Activated CD4-positive, alpha-beta T cell treated with anti-CD3 and anti-CD28 coated beads for 36 hours (primary cell): ENCODE measurements at regions of chr10 and their contacts with region 1.

Region 1: GRCh38 chr10:62681211-62681940 is 123.1 kb upstream of the ADO start:
- DNase-seq: peak; percentile 94
- ATAC-seq: peak; percentile 94
- H3K4me3 Mint-ChIP-seq: peak overlapping the region; percentile 11
- H3K27ac Mint-ChIP-seq: peak overlapping the region; percentile 86
- H3K4me1 Mint-ChIP-seq: peaks cover 34% of the 10 kb centered on the region
- H3K27me3 Mint-ChIP-seq: peaks cover 7% of the 10 kb centered on the region

Region 2: DNA sequence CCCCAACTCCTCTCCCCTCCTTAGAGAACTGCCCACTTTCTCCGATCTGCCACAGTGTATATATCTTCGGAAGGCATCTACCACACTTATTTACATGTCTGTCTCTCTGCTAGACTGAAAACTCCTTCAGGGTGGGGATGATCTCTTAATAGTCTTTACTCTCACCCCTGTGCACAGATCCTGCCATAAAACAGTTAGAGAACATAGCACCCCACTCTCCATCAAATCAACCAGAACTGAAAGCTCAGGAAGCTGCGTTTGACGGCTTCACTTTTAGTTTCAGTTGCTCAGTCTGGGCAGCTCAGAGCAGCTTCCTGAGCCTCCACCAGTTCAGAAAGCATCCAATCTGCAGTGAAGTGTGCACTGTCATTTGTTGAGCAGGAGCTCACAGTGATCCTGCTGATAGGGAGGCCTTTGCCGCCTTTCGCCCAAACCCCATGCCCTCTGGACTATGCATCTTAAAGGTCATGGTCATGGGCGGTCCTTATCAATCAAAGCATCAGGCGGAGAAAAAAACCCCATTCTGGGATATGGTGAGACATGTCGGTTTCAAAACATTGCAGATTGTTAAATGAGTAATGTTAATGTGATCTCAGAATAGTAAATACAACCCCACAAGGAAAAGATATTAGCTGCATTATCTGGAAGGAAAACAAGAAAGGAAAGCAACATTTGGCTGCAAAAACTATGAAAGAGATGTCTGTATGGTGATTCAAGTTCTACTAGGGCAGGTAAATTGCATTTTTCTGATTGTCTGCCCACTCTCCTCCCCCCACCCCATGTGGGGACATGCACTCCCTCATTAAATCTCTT is 43.9 kb before region 1 on chr10:
- CTCF ChIA-PET with region 1: interaction called, 12 read pairs
- POLR2A ChIA-PET with region 1: interaction called, 7 read pairs
- intact Hi-C with region 1: loop called (anchors 1 kb)
- DNase-seq: peak; percentile 82
- ATAC-seq: peak; percentile 95
- H3K4me3 Mint-ChIP-seq: no peak overlapping the region
- H3K27ac Mint-ChIP-seq: no peak overlapping the region
- H3K4me1 Mint-ChIP-seq: peaks cover 21% of the 10 kb centered on the region
- H3K27me3 Mint-ChIP-seq: no peaks in the 10 kb centered on the region

Region 3: DNA sequence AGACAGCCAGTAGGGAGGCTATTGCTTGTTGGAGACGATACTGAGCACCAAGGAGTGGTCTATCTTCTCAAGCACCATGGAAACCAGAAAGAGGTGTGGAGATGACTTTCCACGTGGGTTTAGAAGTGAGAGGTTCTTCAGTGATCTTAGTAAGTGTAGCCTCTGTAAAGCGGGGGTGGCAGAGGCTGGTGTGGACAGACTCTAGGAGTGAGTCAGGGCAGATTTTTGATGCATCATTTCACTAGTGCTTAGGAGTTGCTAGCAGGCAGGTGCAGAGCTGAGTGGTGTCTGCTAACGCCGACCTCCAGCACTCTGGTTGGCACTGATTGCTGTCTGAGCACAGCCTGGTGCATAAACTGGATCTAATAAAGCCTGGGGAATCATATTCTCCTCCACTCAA is 44.8 kb after region 1 on chr10:
- CTCF ChIA-PET with region 1: interaction called, 14 read pairs
- POLR2A ChIA-PET with region 1: no interaction called
- intact Hi-C with region 1: loop called in 1 of 2 experiments (anchors 1 kb)
- DNase-seq: peak; percentile 84
- ATAC-seq: peak; percentile 97
- H3K4me3 Mint-ChIP-seq: no peak overlapping the region
- H3K27ac Mint-ChIP-seq: no peak overlapping the region
- H3K4me1 Mint-ChIP-seq: peaks cover 48% of the 10 kb centered on the region
- H3K27me3 Mint-ChIP-seq: peaks cover 2% of the 10 kb centered on the region

Region 4: GRCh38 chr10:62748386-62748785 is 67.0 kb after region 1 on chr10:
- CTCF ChIA-PET with region 1: interaction called, 5 read pairs
- POLR2A ChIA-PET with region 1: interaction called, 3 read pairs
- intact Hi-C with region 1: loop called in 1 of 2 experiments (anchors 1 kb)
- DNase-seq: no peak
- ATAC-seq: no peak
- H3K4me3 Mint-ChIP-seq: no peak overlapping the region
- H3K27ac Mint-ChIP-seq: peak overlapping the region; percentile 82
- H3K4me1 Mint-ChIP-seq: peaks cover 27% of the 10 kb centered on the region
- H3K27me3 Mint-ChIP-seq: no peaks in the 10 kb centered on the region

Region 5: GRCh38 chr10:62804356-62805230 is 123.2 kb after region 1 on chr10 and contains the start of gene ADO:
- CTCF ChIA-PET with region 1: interaction called, 3 read pairs
- POLR2A ChIA-PET with region 1: no interaction called
- intact Hi-C with region 1: loop called in 1 of 2 experiments (anchors 1 kb)
- DNase-seq: peak; percentile 88
- ATAC-seq: peak; percentile 90
- H3K4me3 Mint-ChIP-seq: peak within 1 kb of the TSS; percentile 83
- H3K27ac Mint-ChIP-seq: peak within 1 kb of the TSS; percentile 99
- H3K4me1 Mint-ChIP-seq: peaks cover 33% of the 10 kb centered on the region
- H3K27me3 Mint-ChIP-seq: no peaks in the 10 kb centered on the region
- total RNA-seq, gene ADO: 21.5 to 23.2 TPM

Region 6: DNA sequence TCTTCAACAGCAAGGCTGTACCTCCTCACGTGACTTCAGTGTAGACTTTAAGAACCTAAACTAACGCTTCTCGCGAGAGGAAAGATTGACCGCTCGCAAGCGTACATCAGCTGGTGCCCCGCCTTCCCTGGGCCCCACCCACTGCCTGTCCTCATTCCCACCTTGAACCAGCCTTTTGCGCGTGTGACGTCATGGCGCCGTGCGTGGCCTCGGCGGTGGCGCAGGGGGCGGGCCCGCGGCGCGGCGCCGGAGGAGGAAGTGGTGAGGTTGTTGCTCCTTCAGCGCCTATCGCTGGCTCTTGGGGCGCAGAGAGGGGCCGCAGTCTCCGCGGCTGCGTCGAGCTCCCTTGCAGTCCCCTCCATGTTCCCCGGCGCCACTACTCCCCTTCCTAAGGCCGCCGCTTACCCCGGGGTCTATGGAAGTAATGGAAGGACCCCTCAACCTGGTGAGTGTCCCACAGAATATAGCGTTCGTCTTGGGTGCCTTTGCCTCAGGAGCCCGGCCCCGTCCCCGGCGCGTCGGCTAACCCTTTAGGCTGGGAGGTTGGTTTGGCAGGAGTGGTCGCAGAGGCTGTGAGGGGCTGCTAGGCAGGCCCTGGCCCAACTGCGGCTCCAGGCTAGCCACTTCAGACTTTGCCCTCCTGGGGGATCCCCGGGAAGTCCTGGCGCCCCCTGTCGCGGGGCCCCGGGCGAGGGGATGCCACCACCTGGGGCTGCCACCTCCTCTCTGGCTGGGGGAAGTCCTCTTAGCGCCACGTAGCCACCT is 451.9 kb after region 1 on chr10 and contains the start of gene NRBF2:
- CTCF ChIA-PET with region 1: interaction called, 4 read pairs
- POLR2A ChIA-PET with region 1: no interaction called
- intact Hi-C with region 1: loop called in 1 of 2 experiments (anchors 1 kb)
- DNase-seq: peak; percentile 99
- ATAC-seq: peak; percentile 90
- H3K4me3 Mint-ChIP-seq: peak within 1 kb of the TSS; percentile 81
- H3K27ac Mint-ChIP-seq: peak within 1 kb of the TSS; percentile 92
- H3K4me1 Mint-ChIP-seq: peaks cover 46% of the 10 kb centered on the region
- H3K27me3 Mint-ChIP-seq: no peaks in the 10 kb centered on the region
- total RNA-seq, gene NRBF2: 23.9 to 24.1 TPM